CD4-positive, alpha-beta memory T cell (primary cell): ENCODE measurements at regions of chr17 and their contacts with region 1.

Region 1: GRCh38 chr17:13031718-13032350 is 14.0 kb upstream of the ELAC2 start:
- DNase-seq: peak in 4 of 5 donors; percentile 37 to 53 (median 49)
- H3K4me3 ChIP-seq: no peak overlapping the region
- H3K4me3 Mint-ChIP-seq: peak overlapping the region in 6 of 8 donors; percentile 27 to 73 (median 45)
- H3K27ac ChIP-seq: no peak overlapping the region
- H3K27ac Mint-ChIP-seq: peak overlapping the region in 6 of 7 donors; percentile 25 to 73 (median 55)
- H3K4me1 ChIP-seq: peaks cover 4% of the 10 kb centered on the region
- H3K4me1 Mint-ChIP-seq: peaks cover 12 to 17% (median 13%) of the 10 kb centered on the region in 4 donors
- H3K27me3 ChIP-seq: no peaks in the 10 kb centered on the region
- H3K27me3 Mint-ChIP-seq: peaks cover 3 to 7% of the 10 kb centered on the region in 2 donors

Region 2: DNA sequence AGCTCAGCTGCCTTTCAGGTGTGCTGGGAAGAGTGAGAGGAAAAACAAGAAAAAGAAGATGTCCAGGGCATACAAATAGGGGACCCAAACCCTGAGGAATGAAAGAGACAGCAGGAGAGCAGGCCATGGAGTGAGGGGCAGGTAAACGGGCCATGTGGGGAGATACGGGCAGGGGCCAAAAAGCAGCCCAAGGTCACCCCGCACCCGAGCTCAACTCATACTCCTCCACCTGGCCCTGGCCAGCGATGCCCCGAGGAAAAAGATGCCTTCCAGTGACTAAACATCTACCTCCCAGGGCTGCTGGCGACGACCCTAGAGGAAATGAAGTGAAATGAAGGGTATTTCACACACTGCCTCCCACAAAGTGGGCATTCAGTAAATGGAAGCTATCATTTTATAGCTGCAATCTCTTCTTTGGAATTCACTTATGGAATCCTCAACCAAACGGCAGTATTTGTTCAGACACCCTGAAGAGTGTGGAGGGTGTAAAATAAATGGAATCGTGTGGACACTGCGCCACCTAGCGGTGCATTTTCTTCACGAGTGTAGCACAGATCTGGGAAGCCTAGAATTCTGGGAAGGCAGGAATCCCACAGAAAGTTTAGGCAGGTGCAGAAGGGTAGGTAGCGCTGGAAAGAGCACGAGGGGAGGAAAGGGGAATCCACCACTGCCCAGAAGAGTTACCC is 28.9 kb before region 1 on chr17:
- CTCF ChIA-PET with region 1: interaction called, 312 read pairs
- POLR2A ChIA-PET with region 1: no interaction called
- intact Hi-C with region 1: no loop called
- DNase-seq: peak in 4 of 5 donors; percentile 14 to 26 (median 18)
- H3K4me3 ChIP-seq: no peak overlapping the region
- H3K4me3 Mint-ChIP-seq: no peak overlapping the region
- H3K27ac ChIP-seq: no peak overlapping the region
- H3K27ac Mint-ChIP-seq: no peak overlapping the region
- H3K4me1 ChIP-seq: no peaks in the 10 kb centered on the region
- H3K4me1 Mint-ChIP-seq: peaks cover 0 to 4% (median 2%) of the 10 kb centered on the region in 4 donors
- H3K27me3 ChIP-seq: no peaks in the 10 kb centered on the region
- H3K27me3 Mint-ChIP-seq: no peaks in the 10 kb centered on the region

Region 3: DNA sequence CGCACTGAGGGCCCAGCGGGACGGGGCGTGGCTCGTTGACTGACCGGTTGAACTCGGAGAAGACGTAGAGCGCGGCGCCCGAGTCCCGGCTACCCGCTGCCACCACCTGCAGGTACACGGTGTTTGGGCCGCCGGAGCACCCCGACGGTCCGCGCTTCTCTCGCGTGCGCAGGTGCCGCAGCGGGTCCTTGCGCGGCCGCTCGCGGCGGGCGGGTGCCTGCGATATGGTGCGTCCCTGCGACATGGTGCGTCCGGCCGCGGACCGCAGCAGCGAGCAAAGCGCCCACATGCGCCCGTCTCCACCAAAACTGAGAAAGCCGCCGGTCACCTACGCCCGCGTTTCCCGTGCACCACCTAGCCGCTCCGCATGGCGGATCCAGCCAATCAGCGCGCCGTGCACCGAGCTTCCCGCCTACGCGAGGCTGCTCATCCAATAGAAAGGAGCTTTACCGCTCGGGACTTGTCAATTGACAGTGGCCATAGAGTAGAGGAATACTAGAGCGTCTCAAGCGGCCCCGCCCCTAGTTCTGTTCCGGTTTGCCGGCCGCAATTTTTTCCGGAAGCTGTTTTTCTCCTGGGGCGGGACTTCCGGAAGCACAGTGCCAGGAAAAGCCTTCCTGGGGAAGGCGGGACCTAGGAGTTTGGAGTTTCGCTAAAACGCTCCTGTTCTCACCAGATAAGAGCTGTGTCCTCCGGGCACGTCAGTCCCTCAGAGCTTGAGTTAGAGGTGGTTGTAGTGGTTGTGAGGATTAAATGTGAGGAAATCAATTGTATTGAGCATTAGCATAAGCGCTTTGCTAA is 14.0 kb before region 1 on chr17 and contains the start of gene ELAC2:
- CTCF ChIA-PET with region 1: interaction called, 312 read pairs
- POLR2A ChIA-PET with region 1: interaction called, 21 read pairs
- intact Hi-C with region 1: no loop called
- DNase-seq: peak; percentile 96 to 98 (median 96)
- H3K4me3 ChIP-seq: peak within 1 kb of the TSS; percentile 77 to 94
- H3K4me3 Mint-ChIP-seq: peak within 1 kb of the TSS; percentile 95 to 100 (median 98)
- H3K27ac ChIP-seq: peak within 1 kb of the TSS; percentile 73
- H3K27ac Mint-ChIP-seq: peak within 1 kb of the TSS; percentile 94 to 98 (median 97)
- H3K4me1 ChIP-seq: peaks cover 18% of the 10 kb centered on the region
- H3K4me1 Mint-ChIP-seq: peaks cover 15 to 44% (median 32%) of the 10 kb centered on the region in 4 donors
- H3K27me3 ChIP-seq: no peaks in the 10 kb centered on the region
- H3K27me3 Mint-ChIP-seq: no peaks in the 10 kb centered on the region
- total RNA-seq, gene ELAC2: 65.8 to 73.2 TPM

Region 4: GRCh38 chr17:13047011-13047606 is 15.3 kb after region 1 on chr17:
- CTCF ChIA-PET with region 1: interaction called, 49 read pairs
- POLR2A ChIA-PET with region 1: no interaction called
- intact Hi-C with region 1: no loop called
- DNase-seq: no peak
- H3K4me3 ChIP-seq: no peak overlapping the region
- H3K4me3 Mint-ChIP-seq: no peak overlapping the region
- H3K27ac ChIP-seq: no peak overlapping the region
- H3K27ac Mint-ChIP-seq: no peak overlapping the region
- H3K4me1 ChIP-seq: no peaks in the 10 kb centered on the region
- H3K4me1 Mint-ChIP-seq: no peaks in the 10 kb centered on the region
- H3K27me3 ChIP-seq: no peaks in the 10 kb centered on the region
- H3K27me3 Mint-ChIP-seq: peaks cover 9 to 16% of the 10 kb centered on the region in 2 donors

Region 5: DNA sequence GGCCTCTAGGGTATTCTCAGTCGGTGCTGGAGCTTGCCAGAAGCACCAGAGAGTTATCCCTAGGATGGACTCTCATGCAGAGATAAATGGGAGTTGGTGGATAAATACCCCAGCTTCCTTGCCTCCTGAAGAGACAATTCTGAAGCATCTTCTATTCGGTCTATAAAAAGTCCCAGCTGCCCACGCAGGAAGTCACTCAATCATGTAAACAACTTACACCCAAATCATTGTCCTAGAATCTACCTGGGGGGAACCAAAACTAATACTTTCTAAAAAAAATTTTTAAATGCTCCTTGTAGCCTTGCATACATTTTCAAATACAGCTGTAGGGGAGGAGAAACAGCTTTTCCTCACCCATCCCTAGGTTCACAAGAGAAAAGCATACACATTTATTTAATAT is 52.6 kb after region 1 on chr17:
- CTCF ChIA-PET with region 1: interaction called, 10 read pairs
- POLR2A ChIA-PET with region 1: no interaction called
- intact Hi-C with region 1: no loop called
- DNase-seq: no peak
- H3K4me3 ChIP-seq: no peak overlapping the region
- H3K4me3 Mint-ChIP-seq: peak overlapping the region; percentile 9 to 78 (median 53)
- H3K27ac ChIP-seq: no peak overlapping the region
- H3K27ac Mint-ChIP-seq: peak overlapping the region; percentile 18 to 81 (median 73)
- H3K4me1 ChIP-seq: peaks cover 14% of the 10 kb centered on the region
- H3K4me1 Mint-ChIP-seq: peaks cover 12 to 27% (median 22%) of the 10 kb centered on the region in 4 donors
- H3K27me3 ChIP-seq: no peaks in the 10 kb centered on the region
- H3K27me3 Mint-ChIP-seq: peaks cover 0 to 1% of the 10 kb centered on the region in 2 donors

Region 6: DNA sequence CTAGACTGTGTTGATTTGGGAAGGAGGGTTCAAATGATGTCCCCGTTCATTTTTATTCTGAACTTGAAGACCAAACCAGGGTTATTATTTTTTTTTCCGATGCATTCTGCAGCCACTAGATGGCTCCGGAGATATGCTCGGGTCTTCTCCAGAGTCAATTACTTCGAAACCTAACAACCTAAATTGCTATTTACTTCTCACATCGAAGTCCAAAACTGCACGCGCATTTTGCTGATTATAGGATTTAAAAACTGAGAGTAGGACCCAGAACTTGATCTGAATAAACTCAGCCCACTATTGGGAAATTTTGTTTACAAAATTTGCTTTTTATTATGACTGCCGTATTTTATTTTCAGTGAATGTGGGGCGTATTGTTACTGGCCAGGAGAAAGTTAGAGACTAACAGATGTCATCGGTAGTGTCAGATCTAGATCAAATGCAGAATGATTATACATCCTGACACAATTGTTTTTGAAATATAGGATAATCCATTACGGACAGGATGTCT is 306.1 kb after region 1 on chr17:
- CTCF ChIA-PET with region 1: no interaction called
- POLR2A ChIA-PET with region 1: no interaction called
- intact Hi-C with region 1: loop called (anchors 5 kb)
- DNase-seq: peak in 4 of 5 donors; percentile 17 to 20 (median 18)
- H3K4me3 ChIP-seq: no peak overlapping the region
- H3K4me3 Mint-ChIP-seq: peak overlapping the region in 4 of 8 donors; percentile 1 to 49 (median 24)
- H3K27ac ChIP-seq: no peak overlapping the region
- H3K27ac Mint-ChIP-seq: no peak overlapping the region
- H3K4me1 ChIP-seq: peaks cover 4% of the 10 kb centered on the region
- H3K4me1 Mint-ChIP-seq: peaks cover 0 to 7% (median 2%) of the 10 kb centered on the region in 4 donors
- H3K27me3 ChIP-seq: no peaks in the 10 kb centered on the region
- H3K27me3 Mint-ChIP-seq: peaks cover 18 to 22% of the 10 kb centered on the region in 2 donors